Calu3 (cell line): ENCODE measurements at regions of chr21 and their contacts with region 1.

Region 1: GRCh38 chr21:29098156-29098555 is 24.7 kb upstream of the CCT8 start:
- DNase-seq: no peak
- H3K4me3 Mint-ChIP-seq: no peak overlapping the region
- H3K27ac Mint-ChIP-seq: no peak overlapping the region
- H3K4me1 Mint-ChIP-seq: no peaks in the 10 kb centered on the region
- H3K27me3 Mint-ChIP-seq: no peaks in the 10 kb centered on the region
- CTCF ChIP-seq: no peak

Region 2: GRCh38 chr21:28904961-28905435 is 193.2 kb before region 1 on chr21:
- CTCF ChIA-PET with region 1: no interaction called
- intact Hi-C with region 1: no loop called
- DNase-seq: no peak
- H3K4me3 Mint-ChIP-seq: no peak overlapping the region
- H3K27ac Mint-ChIP-seq: no peak overlapping the region
- H3K4me1 Mint-ChIP-seq: no peaks in the 10 kb centered on the region
- H3K27me3 Mint-ChIP-seq: no peaks in the 10 kb centered on the region
- CTCF ChIP-seq: no peak

Region 3: DNA sequence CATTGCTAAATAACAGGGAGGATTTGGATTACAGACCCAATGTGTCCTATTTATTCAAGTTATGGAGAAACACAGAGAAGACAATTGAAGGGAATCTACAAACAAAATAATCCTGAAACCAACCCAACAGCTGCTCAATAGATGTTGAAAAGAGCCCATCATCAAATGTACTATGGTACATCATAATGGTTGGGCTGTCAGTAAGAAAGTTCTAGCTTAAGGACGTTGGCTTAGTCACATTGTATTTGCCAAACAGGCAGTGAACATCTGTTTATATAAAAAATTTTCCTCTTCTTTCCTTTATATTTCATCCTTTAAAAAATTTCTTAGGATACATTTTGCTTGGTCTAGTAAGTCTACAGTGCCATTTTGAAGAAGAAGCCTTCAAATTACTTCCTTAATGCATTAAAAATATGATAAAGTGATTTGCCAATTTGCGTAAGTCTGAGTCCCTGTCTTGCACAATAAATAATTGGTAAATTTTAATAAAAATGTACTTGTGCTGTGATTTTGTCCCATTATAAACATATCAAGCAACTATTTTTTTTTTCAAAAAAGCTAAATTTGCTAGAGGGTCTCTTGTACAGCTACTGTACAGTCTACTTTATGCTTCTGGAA is 46.7 kb after region 1 on chr21:
- CTCF ChIA-PET with region 1: no interaction called
- intact Hi-C with region 1: loop called (anchors 5 kb)
- DNase-seq: no peak
- H3K4me3 Mint-ChIP-seq: no peak overlapping the region
- H3K27ac Mint-ChIP-seq: no peak overlapping the region
- H3K4me1 Mint-ChIP-seq: peaks cover 3% of the 10 kb centered on the region
- H3K27me3 Mint-ChIP-seq: no peaks in the 10 kb centered on the region
- CTCF ChIP-seq: no peak

Region 4: DNA sequence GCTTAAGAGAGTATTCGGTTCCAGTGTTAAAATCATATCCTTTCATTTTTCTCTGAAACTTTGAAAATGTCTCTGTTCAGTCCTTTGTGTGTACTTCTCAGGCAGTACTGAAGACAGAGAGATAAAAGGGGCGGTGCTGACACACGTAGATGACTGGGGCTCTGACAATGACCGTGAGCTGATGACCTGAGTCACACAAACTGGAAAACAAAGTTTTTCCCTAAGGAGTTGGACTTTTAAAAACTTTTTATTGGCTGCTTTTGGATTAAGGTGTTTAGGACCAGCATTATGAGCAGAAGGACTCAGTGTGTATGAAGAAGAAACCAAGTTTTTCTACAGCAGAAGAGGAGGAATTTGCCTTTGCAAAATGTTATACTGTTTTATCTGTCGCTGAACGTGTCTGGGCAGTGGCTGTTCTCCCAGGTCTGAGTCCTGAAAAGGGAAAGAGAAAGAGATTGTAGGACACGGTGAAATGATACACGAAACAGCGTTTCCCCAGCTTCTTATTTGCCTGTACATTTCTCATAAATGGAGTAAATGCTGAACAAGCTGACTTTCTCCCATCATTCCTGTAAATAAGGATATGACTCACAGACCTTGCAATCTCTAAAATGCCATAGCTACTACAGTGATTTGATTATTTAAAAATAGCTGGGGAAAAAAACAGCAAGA is 83.8 kb after region 1 on chr21:
- CTCF ChIA-PET with region 1: no interaction called
- intact Hi-C with region 1: no loop called
- DNase-seq: no peak
- H3K4me3 Mint-ChIP-seq: peak overlapping the region; percentile 46
- H3K27ac Mint-ChIP-seq: peak overlapping the region; percentile 85
- H3K4me1 Mint-ChIP-seq: peaks cover 43% of the 10 kb centered on the region
- H3K27me3 Mint-ChIP-seq: no peaks in the 10 kb centered on the region
- CTCF ChIP-seq: no peak